PC-3 (cell line): ENCODE measurements at regions of chr5 and their contacts with region 1.

Region 1: GRCh38 chr5:127536687-127537086 is 19.2 kb downstream of the PRRC1 start:
- DNase-seq: peak; percentile 25
- ATAC-seq: no peak
- H3K4me3 ChIP-seq: no peak overlapping the region
- H3K27ac ChIP-seq: no peak overlapping the region
- H3K4me1 ChIP-seq: no peaks in the 10 kb centered on the region
- H3K27me3 ChIP-seq: no peaks in the 10 kb centered on the region
- CTCF ChIP-seq: peak; percentile 69

Region 2: DNA sequence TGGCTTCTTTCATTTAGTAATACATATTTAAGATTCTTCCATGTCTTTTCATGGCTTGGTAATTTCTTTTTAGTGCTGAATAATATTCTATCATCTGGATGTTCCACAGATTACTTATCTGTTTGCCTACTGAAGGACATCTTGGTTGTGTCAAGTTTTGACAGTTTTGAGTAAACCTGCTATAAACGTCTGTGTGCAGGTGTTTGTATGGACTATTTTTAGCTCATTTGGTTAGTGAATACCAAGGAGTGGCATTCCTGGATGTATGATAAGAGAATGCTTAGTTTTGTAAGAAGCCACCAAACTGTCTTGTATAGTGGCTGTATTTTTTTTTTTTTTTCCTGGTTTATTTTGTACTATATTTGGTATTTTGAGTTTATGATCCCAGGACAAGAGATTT is 19.1 kb after region 1 on chr5:
- CTCF ChIA-PET with region 1: no interaction called
- POLR2A ChIA-PET with region 1: interaction called, 11 read pairs
- intact Hi-C with region 1: no loop called
- DNase-seq: peak; percentile 47
- ATAC-seq: peak; percentile 32; the same call in 1 of the 2 replicates
- H3K4me3 ChIP-seq: peak overlapping the region; percentile 33; the same call in 1 of the 2 replicates
- H3K27ac ChIP-seq: peak overlapping the region; percentile 97
- H3K4me1 ChIP-seq: peaks cover 30% of the 10 kb centered on the region
- H3K27me3 ChIP-seq: no peaks in the 10 kb centered on the region
- CTCF ChIP-seq: no peak